Mammary epithelial cell (primary cell): ENCODE measurements at regions of chr16 and their contacts with region 1.

Region 1: GRCh38 chr16:75244844-75245758 is 6.3 kb downstream of the BCAR1 start:
- DNase-seq: peak; percentile 94
- H3K4me3 ChIP-seq: peak overlapping the region in 1 of 3 experiments; percentile 11
- H3K27ac ChIP-seq: peak overlapping the region; percentile 88
- H3K4me1 ChIP-seq: peaks cover 84% of the 10 kb centered on the region
- H3K27me3 ChIP-seq: no peaks in the 10 kb centered on the region
- CTCF ChIP-seq: no peak

Region 2: DNA sequence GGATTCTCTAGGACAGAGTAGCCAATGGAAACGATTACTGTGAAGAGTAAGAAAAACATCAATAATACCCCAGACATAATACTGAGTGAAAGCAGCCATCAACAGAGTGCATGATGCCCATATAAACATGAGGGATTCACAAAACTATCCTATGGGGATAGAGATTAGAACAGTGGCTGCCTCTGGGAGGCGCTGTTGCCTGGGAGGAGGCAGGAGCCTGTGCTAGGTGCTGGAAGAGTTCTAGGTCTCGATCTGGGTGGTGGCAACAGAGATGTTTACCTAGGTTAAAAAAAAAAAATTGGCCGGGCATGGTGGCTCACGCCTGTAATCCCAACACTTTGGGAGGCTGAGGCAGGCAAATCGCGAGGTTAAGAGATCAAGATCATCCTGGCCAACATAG is 478.4 kb before region 1 on chr16:
- CTCF ChIA-PET with region 1: no interaction called
- dilution Hi-C with region 1: no loop called
- in situ Hi-C with region 1: no loop called
- intact Hi-C with region 1: no loop called
- DNase-seq: no peak
- H3K4me3 ChIP-seq: no peak overlapping the region
- H3K27ac ChIP-seq: no peak overlapping the region
- H3K4me1 ChIP-seq: no peaks in the 10 kb centered on the region
- H3K27me3 ChIP-seq: peaks cover 3% of the 10 kb centered on the region
- CTCF ChIP-seq: no peak

Region 3: DNA sequence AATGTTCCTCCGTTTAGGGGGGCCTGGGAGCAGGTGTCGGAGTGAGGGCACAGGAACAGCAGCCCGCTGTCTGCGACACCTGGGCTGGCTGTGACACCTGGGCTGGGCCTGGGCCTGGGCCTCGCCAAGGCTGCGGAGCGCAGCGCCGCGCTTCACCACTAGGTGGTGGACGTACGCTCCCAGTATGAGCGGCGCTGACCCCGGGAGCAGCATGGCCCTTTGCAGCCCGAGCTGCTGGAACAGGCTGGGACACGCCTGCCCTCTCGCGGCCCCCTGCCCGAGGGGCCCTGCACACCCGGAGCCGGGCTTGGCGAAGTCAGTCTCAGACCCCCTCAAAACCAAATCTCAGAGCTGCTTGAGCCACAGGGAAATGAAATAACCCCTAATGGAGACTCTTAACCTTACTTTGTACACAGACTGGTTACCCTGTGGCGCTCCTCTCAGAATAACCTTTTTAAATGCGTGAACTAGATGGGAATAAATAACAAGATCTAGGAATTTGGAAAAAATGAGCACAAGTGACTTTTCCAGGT is 431.9 kb before region 1 on chr16:
- CTCF ChIA-PET with region 1: no interaction called
- dilution Hi-C with region 1: no loop called
- in situ Hi-C with region 1: no loop called
- intact Hi-C with region 1: no loop called
- DNase-seq: peak; percentile 52
- H3K4me3 ChIP-seq: no peak overlapping the region
- H3K27ac ChIP-seq: no peak overlapping the region
- H3K4me1 ChIP-seq: peaks cover 5% of the 10 kb centered on the region
- H3K27me3 ChIP-seq: no peaks in the 10 kb centered on the region
- CTCF ChIP-seq: peak; percentile 88 to 97

Region 4: DNA sequence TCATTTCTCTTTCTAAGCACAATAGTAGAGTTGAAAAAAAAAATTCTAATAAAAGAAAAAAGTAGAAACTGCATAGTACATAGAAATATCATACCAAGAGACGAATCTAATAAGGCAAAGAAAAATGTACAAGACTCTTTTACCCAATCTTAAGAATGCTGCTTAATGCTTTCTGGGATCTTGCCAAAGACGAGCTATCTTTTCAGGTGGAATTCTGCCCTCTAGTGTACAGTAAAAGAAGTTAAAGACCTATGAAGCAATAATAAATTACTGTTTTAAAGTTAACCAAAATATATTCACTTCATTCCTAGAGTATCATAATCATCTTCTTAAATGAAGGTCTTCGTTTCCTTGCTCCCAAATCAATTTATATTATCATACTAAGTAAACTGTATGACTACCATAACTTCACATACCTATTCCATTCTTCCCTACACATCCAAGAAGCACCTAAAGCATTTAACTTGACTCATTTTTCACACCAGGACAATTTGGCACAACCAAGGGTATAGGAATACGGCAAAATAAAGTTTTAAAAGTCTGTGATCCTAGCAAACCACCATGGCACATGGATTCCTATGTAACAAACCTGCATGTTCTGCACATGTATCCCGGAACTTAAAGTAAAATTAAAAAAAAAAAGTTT is 140.5 kb after region 1 on chr16:
- CTCF ChIA-PET with region 1: interaction called, 3 read pairs
- dilution Hi-C with region 1: no loop called
- in situ Hi-C with region 1: loop called in 1 of 2 experiments (anchors 5 kb)
- intact Hi-C with region 1: loop called (anchors 1 kb)
- DNase-seq: peak; percentile 59
- H3K4me3 ChIP-seq: no peak overlapping the region
- H3K27ac ChIP-seq: peak overlapping the region; percentile 60
- H3K4me1 ChIP-seq: peaks cover 16% of the 10 kb centered on the region
- H3K27me3 ChIP-seq: no peaks in the 10 kb centered on the region
- CTCF ChIP-seq: peak; percentile 46 to 50